ENCODE measurements at regions of chr2 and their contacts with region 1.

Region 1: DNA sequence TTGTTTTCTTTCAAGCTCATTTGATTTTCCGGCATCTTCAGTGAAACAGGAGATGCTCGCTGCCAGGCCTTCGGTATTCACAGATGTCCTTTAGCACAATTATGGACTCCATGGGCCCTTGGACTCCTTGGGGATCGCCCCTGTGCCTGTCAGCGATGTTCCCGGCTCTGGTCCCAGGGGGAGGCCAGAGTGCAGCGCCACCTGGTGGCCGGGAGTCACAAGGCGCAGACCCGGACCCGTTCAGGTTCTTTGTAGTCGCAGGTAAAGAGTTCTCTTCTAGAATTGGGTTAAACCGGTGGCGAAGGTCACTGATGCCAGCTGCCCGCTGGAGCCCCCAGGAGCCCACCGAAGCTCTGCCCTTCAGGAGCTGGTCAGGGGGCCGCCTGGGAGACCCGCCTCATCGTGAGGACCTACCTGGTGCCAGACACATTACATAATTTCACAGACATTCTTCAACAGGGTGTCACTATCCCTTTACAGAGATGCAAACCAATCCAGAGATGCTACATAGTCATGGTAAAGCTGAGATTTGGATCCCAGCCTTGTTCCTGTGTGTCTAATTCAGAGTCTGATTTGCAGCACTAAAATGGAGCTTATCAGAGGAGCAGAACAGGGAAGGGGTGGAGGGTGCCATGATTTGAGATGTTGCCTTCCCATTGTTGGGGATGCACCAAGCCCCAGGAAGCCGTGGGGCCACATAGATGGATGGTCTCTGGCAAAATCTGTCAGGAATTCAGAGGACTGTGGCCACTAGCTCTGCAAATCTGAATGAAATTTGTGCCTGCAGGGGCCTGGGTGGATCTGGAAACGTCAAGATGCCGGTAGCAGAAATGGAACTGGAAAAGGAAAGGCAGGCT is 6.0 kb upstream of the INPP5D start:
- DNase-seq: peak; percentile 89
- CTCF ChIP-seq: peak; percentile 90

Region 2: DNA sequence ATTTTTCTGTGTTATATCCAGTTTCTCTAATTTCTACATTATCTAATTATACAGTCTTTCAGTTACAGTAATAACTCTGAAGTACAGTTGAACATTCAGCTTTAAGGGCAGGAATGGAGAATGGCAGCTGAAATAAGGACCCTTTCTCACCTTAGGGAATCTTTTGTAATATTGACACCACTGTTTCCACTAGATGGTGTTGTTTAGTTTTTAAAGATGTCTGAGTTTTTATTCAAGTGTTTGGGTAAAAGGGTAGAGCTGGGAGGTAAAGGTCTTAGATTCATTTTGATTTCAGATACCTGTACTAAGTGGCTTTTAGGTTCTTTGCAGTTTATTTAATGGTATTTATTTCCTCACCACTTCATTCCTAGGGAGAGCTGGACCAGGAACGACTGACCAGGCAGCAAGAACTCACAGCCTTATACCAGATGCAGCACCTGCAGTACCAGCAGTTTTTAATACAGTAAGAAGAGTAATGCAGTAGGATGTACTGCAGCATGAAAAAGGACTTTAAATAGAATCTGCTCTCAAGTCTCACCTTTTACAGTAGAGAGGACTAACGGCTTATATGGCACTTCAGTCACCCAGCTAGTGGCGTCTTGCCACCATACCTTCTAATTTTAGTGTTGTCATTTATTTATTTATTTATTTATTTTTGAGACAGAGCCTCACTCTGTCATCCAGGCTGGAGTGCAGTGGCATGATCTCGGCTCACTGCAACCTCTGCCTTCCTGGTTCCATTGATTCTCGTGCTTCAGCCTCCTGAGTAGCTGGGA is 244.6 kb before region 1 on chr2:
- CTCF ChIA-PET with region 1: interaction called, 14 read pairs
- POLR2A ChIA-PET with region 1: no interaction called
- DNase-seq: no peak
- CTCF ChIP-seq: no peak

Region 3: GRCh38 chr2:232860593-232861241 is 193.4 kb before region 1 on chr2:
- CTCF ChIA-PET with region 1: interaction called, 34 read pairs
- POLR2A ChIA-PET with region 1: no interaction called
- DNase-seq: no peak
- CTCF ChIP-seq: no peak

Region 4: DNA sequence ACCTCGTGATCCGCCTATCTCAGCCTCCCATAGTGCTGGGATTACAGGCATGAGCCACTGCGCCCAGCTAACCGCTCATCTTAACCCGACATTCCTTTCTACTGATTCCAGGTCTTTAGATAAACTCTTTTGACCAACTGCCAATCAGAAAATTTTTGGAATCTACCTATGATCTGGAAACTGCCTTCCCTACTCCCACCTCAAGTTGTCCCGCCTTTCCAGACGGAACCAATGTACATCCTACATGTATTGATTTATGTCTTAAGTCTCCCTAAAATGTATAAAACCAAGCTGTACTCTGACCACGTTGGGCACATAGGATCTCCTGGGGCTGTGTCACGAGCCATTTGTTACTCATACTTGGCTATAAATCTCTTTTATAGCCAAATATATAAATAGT is 24.8 kb before region 1 on chr2:
- CTCF ChIA-PET with region 1: interaction called, 22 read pairs
- POLR2A ChIA-PET with region 1: no interaction called
- DNase-seq: no peak
- CTCF ChIP-seq: no peak

Region 5: DNA sequence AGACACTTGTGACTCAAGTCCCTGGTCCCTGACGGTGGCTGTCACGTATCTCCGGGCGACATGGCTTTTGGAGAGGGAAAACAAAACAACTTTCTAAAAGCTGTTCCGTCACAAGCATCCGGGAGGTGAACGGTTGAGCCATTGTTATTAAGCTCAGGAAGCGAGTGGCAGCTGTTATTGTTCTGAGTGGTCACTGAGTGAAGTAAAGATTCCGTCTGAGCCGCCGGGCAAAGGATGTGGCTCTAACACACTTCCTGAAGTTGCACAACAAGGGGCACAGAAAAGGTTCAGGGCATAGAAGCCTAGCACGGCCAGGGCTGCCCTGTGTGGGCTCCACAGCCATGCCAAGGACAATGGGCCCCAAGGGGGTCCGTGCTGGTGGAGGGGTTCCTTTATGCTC is 30.3 kb after region 1 on chr2:
- CTCF ChIA-PET with region 1: interaction called, 55 read pairs
- POLR2A ChIA-PET with region 1: interaction called, 28 read pairs
- DNase-seq: no peak
- CTCF ChIP-seq: no peak

Region 6: DNA sequence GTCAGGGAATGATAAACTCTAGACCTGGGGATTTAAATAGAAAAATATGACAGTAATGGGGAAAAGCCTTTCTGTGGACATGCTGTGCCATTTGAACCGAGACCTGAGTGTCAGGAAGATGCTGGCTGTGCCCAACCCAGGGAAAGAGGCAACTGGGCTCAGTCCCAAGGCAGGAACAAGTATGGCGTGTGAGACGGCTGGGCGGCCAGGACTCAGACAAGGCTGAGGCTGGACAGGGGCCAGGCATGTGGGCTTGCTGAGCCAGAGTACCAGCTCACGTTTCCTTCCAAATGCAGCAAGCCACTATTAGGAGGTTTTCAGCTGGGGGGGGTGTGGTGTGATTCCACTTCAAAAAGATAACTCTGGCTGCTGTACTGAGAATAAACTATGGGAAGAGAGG is 98.4 kb after region 1 on chr2:
- CTCF ChIA-PET with region 1: no interaction called
- POLR2A ChIA-PET with region 1: no interaction called
- DNase-seq: no peak
- CTCF ChIP-seq: no peak